Endothelial cell of umbilical vein (primary cell): ENCODE measurements at regions of chr2 and their contacts with region 1.

Region 1: DNA sequence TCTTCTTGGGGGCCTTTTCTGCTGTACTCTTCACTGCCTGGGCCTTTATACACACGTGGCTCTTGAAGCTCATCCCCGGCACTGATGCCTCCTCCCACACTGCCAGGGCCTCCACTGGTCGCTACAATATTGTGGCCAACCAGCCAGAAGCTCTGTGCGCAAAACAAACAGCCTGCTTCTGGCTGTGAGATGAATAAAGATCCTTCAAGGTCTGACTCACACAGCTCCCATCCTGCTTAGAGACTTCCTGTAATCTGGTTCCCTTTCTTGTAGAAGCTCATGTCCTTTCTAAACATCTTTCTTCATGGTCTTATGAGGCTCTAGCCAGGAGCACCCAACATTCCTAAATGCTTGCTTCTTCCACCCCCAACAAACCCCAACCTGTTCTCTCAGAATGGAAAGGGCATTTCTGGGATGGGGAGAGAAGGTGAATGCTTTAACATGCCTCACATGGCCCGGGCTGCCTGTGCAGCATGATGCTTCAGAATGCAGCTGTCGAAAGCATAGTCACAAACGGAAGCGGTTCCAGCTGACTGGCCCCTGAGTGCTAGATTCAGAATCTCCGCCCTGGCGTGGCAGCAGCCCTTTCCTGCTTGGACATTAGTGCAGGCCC is 24.6 kb downstream of the NRP2 start:
- DNase-seq: peak; percentile 93
- H3K4me3 ChIP-seq: no peak overlapping the region
- H3K27ac ChIP-seq: peak overlapping the region; percentile 82
- H3K4me1 ChIP-seq: peaks cover 69% of the 10 kb centered on the region
- H3K27me3 ChIP-seq: no peaks in the 10 kb centered on the region
- CTCF ChIP-seq: no peak
- POLR2A ChIP-seq: no peak

Region 2: GRCh38 chr2:205721057-205721449 is 14.2 kb after region 1 on chr2:
- CTCF ChIA-PET with region 1: interaction called, 17 read pairs
- POLR2A ChIA-PET with region 1: no interaction called
- dilution Hi-C with region 1: no loop called
- intact Hi-C with region 1: no loop called
- DNase-seq: no peak
- H3K4me3 ChIP-seq: no peak overlapping the region
- H3K27ac ChIP-seq: no peak overlapping the region
- H3K4me1 ChIP-seq: no peaks in the 10 kb centered on the region
- H3K27me3 ChIP-seq: no peaks in the 10 kb centered on the region
- CTCF ChIP-seq: peak; percentile 25 to 47
- POLR2A ChIP-seq: no peak

Region 3: GRCh38 chr2:205758051-205758450 is 51.2 kb after region 1 on chr2:
- CTCF ChIA-PET with region 1: no interaction called
- POLR2A ChIA-PET with region 1: no interaction called
- dilution Hi-C with region 1: no loop called
- intact Hi-C with region 1: loop called (anchors 2 kb)
- DNase-seq: peak; percentile 73
- H3K4me3 ChIP-seq: no peak overlapping the region
- H3K27ac ChIP-seq: peak overlapping the region; percentile 73
- H3K4me1 ChIP-seq: peaks cover 29% of the 10 kb centered on the region
- H3K27me3 ChIP-seq: no peaks in the 10 kb centered on the region
- CTCF ChIP-seq: no peak
- POLR2A ChIP-seq: no peak